T-cell (primary cell): ENCODE measurements at regions of chr13 and their contacts with region 1.

Region 1: GRCh38 chr13:27980280-27980998 is 8.1 kb downstream of the URAD start:
- DNase-seq: no peak
- ATAC-seq: no peak
- H3K4me3 ChIP-seq: no peak overlapping the region
- H3K4me3 Mint-ChIP-seq: peak overlapping the region in 1 of 3 donors; percentile 25
- H3K27ac ChIP-seq: no peak overlapping the region
- H3K27ac Mint-ChIP-seq: no peak overlapping the region
- H3K4me1 ChIP-seq: peaks cover 0 to 24% of the 10 kb centered on the region in 2 experiments
- H3K4me1 Mint-ChIP-seq: peaks cover 13 to 30% (median 27%) of the 10 kb centered on the region in 3 donors
- H3K27me3 ChIP-seq: peaks cover 33 to 72% of the 10 kb centered on the region in 2 experiments
- H3K27me3 Mint-ChIP-seq: peaks cover 67 to 76% of the 10 kb centered on the region in 2 donors

Region 2: GRCh38 chr13:26985285-26985878 is 995.1 kb before region 1 on chr13:
- CTCF ChIA-PET with region 1: interaction called, 6 to 13 read pairs
- POLR2A ChIA-PET with region 1: no interaction called
- DNase-seq: peak; percentile 22 to 86 (median 59)
- ATAC-seq: peak; percentile 83 to 86 (median 84)
- H3K4me3 ChIP-seq: no peak overlapping the region
- H3K4me3 Mint-ChIP-seq: no peak overlapping the region
- H3K27ac ChIP-seq: no peak overlapping the region
- H3K27ac Mint-ChIP-seq: no peak overlapping the region
- H3K4me1 ChIP-seq: no peaks in the 10 kb centered on the region
- H3K4me1 Mint-ChIP-seq: no peaks in the 10 kb centered on the region
- H3K27me3 ChIP-seq: peaks cover 0 to 20% of the 10 kb centered on the region in 2 experiments
- H3K27me3 Mint-ChIP-seq: peaks cover 3 to 23% of the 10 kb centered on the region in 2 donors

Region 3: DNA sequence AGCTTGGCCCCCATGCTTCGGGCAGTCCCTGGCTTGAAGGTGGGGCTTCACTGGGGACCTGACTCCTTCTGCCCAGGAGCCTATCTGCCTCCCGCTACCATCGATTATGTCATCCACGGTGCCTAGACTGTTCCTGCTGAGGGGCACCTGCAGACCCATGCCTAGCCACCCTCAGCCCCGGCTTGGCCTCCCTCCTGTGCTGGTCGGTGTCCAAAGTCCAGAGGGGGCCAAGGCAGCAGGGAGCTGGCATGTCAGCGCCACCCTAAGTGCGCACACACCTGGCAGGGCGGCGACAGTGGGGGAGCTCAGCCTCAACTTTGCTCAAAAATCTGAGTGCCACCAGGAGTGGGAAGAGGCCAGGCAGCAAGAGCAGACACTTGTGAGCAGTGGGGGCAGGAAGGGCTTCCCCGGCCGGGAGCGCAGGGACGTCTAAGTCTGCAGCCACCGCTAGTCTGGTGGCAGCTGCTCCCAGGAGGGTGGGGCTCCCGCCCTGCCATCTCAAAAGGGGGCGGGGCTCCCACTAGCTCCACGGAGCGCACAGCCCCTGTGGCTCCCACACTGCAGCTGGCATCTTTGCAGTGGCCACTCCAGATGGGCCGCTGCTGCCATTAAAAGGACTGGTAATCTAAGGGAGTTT is 21.5 kb after region 1 on chr13:
- CTCF ChIA-PET with region 1: interaction called, 3 to 11 read pairs
- POLR2A ChIA-PET with region 1: no interaction called
- DNase-seq: no peak
- ATAC-seq: no peak
- H3K4me3 ChIP-seq: no peak overlapping the region
- H3K4me3 Mint-ChIP-seq: no peak overlapping the region
- H3K27ac ChIP-seq: no peak overlapping the region
- H3K27ac Mint-ChIP-seq: no peak overlapping the region
- H3K4me1 ChIP-seq: no peaks in the 10 kb centered on the region
- H3K4me1 Mint-ChIP-seq: peaks cover 0 to 8% (median 3%) of the 10 kb centered on the region in 3 donors
- H3K27me3 ChIP-seq: no peaks in the 10 kb centered on the region
- H3K27me3 Mint-ChIP-seq: no peaks in the 10 kb centered on the region